HEK293 (cell line): ENCODE measurements at regions of chr17 and their contacts with region 1.

Region 1: GRCh38 chr17:7403977-7404736 is at the start of gene TMEM256:
- H3K4me3 ChIP-seq: peak within 1 kb of the TSS; percentile 83
- H3K27ac ChIP-seq: peak within 1 kb of the TSS; percentile 81
- H3K4me1 ChIP-seq: peaks cover 8% of the 10 kb centered on the region
- CTCF ChIP-seq: no peak

Region 2: GRCh38 chr17:7336240-7337175 is 67.6 kb before region 1 on chr17 and contains the start of gene ACAP1:
- CTCF ChIA-PET with region 1: no interaction called
- POLR2A ChIA-PET with region 1: no interaction called
- H3K4me3 ChIP-seq: no peak within 1 kb of the TSS
- H3K27ac ChIP-seq: no peak within 1 kb of the TSS
- H3K4me1 ChIP-seq: no peaks in the 10 kb centered on the region
- CTCF ChIP-seq: no peak

Region 3: GRCh38 chr17:7388856-7389255 is 15.3 kb before region 1 on chr17:
- CTCF ChIA-PET with region 1: interaction called, 5 read pairs
- POLR2A ChIA-PET with region 1: interaction called, 67 read pairs
- H3K4me3 ChIP-seq: no peak overlapping the region
- H3K27ac ChIP-seq: no peak overlapping the region
- H3K4me1 ChIP-seq: peaks cover 1% of the 10 kb centered on the region
- CTCF ChIP-seq: no peak

Region 4: GRCh38 chr17:7444682-7445618 is 40.8 kb after region 1 on chr17 and contains the start of gene CHRNB1:
- CTCF ChIA-PET with region 1: interaction called, 3 read pairs
- POLR2A ChIA-PET with region 1: interaction called, 21 read pairs
- H3K4me3 ChIP-seq: peak within 1 kb of the TSS; percentile 57
- H3K27ac ChIP-seq: no peak within 1 kb of the TSS; the same call in 1 of the 2 replicates
- H3K4me1 ChIP-seq: peaks cover 19% of the 10 kb centered on the region
- CTCF ChIP-seq: peak; percentile 64

Region 5: DNA sequence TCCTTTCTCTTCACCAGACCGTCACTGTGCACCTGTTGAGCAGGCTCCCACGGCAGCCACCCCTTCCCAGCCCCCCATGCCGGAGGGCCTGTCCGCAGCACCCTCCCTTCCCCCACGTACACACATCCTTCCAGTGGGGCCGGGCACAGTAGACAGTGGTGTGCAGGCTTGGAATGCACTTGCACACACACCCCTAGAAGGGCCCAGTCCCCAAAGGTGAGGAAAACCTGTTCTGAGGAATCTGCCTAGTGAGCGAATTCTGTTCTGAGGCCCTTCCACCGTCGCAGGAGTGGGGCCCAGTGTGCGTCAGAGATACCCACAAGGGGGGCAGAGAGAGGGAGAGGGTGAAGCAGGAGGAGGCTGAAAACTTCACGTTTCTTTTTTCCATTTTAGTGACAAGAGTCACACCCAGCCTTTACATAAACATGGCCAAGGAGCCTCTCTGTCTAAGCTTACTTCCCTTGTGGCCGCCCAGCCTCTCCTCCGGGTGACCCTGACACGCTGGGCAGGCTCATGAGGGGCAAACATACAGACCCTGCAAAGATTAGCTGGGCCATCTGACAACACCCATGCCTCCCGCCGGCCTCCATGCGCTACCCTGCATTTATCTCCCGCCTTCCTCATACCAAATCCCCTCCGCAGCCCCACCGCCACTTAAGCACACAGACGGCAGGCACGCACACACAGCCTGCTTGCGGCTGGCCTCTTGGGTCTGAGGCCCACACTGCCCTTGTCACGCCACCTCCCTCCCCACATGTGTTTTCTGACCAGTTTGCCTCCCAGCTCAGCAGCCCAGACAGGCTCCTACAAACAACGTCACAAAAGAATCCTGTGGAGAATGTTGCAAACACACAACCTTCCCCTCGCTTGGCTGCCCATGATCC is 73.5 kb after region 1 on chr17:
- CTCF ChIA-PET with region 1: no interaction called
- POLR2A ChIA-PET with region 1: interaction called, 27 read pairs
- H3K4me3 ChIP-seq: no peak overlapping the region; the same call in 1 of the 2 replicates
- H3K27ac ChIP-seq: peak overlapping the region; percentile 97; the same call in 1 of the 2 replicates
- H3K4me1 ChIP-seq: peaks cover 15% of the 10 kb centered on the region
- CTCF ChIP-seq: no peak

Region 6: GRCh38 chr17:7572588-7573323 is 168.6 kb after region 1 on chr17:
- CTCF ChIA-PET with region 1: no interaction called
- POLR2A ChIA-PET with region 1: interaction called, 13 read pairs
- H3K4me3 ChIP-seq: peak overlapping the region; percentile 97
- H3K27ac ChIP-seq: peak overlapping the region; percentile 98
- H3K4me1 ChIP-seq: peaks cover 5% of the 10 kb centered on the region
- CTCF ChIP-seq: 0 out of 2 replicates have a peak, but pooled peaks have one; percentile 38